Right ventricle myocardium inferior (tissue), 1 donor: ENCODE measurements at regions of chr3 and their contacts with region 1.

Region 1: GRCh38 chr3:172666873-172667694 is 43.8 kb downstream of the NCEH1 start:
- DNase-seq: no peak
- ATAC-seq: peak; percentile 92

Region 2: DNA sequence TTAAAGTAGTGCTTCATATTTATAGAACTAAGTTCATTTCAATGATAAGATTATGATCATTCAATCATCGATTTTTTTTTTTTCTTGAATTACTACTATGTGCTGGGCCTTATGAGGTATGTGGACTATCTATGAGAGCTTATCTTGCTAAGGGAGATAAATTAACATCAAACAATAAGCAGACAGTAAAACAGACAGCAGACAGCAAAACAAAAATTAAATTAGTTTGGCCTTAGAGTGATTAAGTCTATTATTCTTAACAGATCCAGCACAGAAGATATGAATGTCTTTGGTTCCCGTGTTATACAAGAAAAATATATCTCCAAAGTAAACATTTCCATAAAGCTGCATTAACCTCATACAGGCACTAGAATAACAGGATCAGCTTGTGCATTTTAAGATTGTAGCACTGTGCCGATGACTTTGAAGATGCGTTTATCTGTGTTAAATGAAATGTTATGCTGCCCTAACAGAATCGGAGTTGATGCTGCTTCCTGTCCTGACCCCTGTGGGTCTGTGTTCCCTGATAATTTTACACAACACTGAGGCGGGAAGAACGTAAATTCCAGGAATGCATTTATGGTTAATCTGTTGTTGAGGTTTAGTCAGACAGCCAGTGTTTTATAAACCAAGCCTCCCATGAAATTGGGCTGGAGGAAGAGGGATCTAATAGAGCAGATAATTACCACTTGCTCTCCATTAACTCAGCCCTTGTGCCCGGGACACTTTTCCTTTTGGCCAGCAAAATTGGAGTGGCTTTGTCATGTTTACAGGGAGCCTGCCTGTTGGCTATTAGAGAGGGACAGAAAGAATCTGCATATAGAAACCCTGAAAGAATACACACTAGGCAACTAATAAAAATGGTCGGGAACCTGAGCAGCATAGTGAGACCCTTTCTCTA is 299.6 kb before region 1 on chr3:
- intact Hi-C with region 1: loop called (anchors 10 kb)
- DNase-seq: no peak
- ATAC-seq: no peak

Region 3: GRCh38 chr3:172832983-172833382 is 165.9 kb after region 1 on chr3:
- intact Hi-C with region 1: no loop called
- DNase-seq: no peak
- ATAC-seq: no peak

Region 4: DNA sequence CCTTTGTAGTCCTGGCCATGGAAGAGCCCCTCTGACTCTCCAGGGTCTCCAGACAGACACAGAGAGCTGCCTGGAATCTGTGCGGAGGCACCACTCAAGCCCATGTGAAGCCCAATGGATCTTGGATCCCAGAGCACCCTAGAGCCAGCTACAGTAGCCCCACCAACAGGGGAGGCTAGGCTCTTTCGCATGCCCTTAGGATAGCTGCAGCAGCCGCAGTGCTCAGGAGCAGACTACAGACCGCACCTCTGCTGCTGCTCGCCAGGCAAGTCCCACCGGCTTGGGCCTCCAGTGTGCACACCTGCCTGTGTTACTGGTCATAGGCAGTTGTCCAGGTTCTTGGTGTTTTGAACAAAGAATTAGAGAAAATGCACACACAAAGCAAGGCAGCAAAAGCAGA is 342.3 kb after region 1 on chr3:
- intact Hi-C with region 1: no loop called
- DNase-seq: no peak
- ATAC-seq: no peak